ENCODE measurements at regions of chr7 and their contacts with region 1.

Region 1: DNA sequence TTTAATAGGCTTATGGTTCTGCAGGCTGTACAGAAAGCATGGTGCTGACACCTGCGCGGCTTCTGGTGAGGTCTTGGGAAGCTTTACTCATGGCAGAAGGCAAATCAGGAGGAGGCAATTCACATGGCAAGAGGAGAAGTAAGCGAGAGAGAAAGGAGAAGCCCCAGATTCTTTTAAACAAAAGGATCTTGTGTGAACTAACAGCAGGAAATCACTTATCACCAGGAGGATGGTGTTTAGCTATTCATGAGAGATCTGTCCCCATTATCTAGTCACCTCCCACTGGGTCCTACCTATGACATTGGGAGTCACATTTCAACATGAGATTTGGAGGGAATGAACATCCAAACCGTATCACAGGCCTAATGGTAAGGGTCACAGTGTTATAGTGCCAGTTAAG is 678.0 kb upstream of the KCND2 start:
- DNase-seq: no peak
- ATAC-seq: no peak
- H3K4me3 Mint-ChIP-seq: no peak overlapping the region
- H3K27ac Mint-ChIP-seq: no peak overlapping the region
- H3K4me1 Mint-ChIP-seq: no peaks in the 10 kb centered on the region
- H3K27me3 Mint-ChIP-seq: no peaks in the 10 kb centered on the region
- CTCF ChIP-seq: no peak

Region 2: GRCh38 chr7:118793582-118793981 is 801.4 kb before region 1 on chr7:
- CTCF ChIA-PET with region 1: no interaction called
- POLR2A ChIA-PET with region 1: no interaction called
- intact Hi-C with region 1: no loop called
- DNase-seq: no peak
- ATAC-seq: no peak
- H3K4me3 Mint-ChIP-seq: no peak overlapping the region
- H3K27ac Mint-ChIP-seq: no peak overlapping the region
- H3K4me1 Mint-ChIP-seq: no peaks in the 10 kb centered on the region
- H3K27me3 Mint-ChIP-seq: no peaks in the 10 kb centered on the region
- CTCF ChIP-seq: no peak

Region 3: GRCh38 chr7:119482209-119482608 is 112.7 kb before region 1 on chr7:
- CTCF ChIA-PET with region 1: no interaction called
- POLR2A ChIA-PET with region 1: no interaction called
- intact Hi-C with region 1: no loop called
- DNase-seq: no peak
- ATAC-seq: no peak
- H3K4me3 Mint-ChIP-seq: no peak overlapping the region
- H3K27ac Mint-ChIP-seq: no peak overlapping the region
- H3K4me1 Mint-ChIP-seq: no peaks in the 10 kb centered on the region
- H3K27me3 Mint-ChIP-seq: no peaks in the 10 kb centered on the region
- CTCF ChIP-seq: no peak

Region 4: GRCh38 chr7:119620769-119621168 is 25.8 kb after region 1 on chr7:
- CTCF ChIA-PET with region 1: no interaction called
- POLR2A ChIA-PET with region 1: no interaction called
- intact Hi-C with region 1: loop called (anchors 2 kb)
- DNase-seq: no peak
- ATAC-seq: no peak
- H3K4me3 Mint-ChIP-seq: no peak overlapping the region
- H3K27ac Mint-ChIP-seq: no peak overlapping the region
- H3K4me1 Mint-ChIP-seq: no peaks in the 10 kb centered on the region
- H3K27me3 Mint-ChIP-seq: no peaks in the 10 kb centered on the region
- CTCF ChIP-seq: no peak